Right ventricle myocardium inferior (tissue), 1 donor: ENCODE measurements at regions of chr19 and their contacts with region 1.

Region 1: GRCh38 chr19:2168619-2169424 is 5.1 kb downstream of the DOT1L start:
- DNase-seq: peak; percentile 98
- ATAC-seq: peak; percentile 90

Region 2: GRCh38 chr19:2207991-2208860 is 39.4 kb after region 1 on chr19:
- intact Hi-C with region 1: loop called (anchors 2 kb)
- DNase-seq: no peak
- ATAC-seq: peak; percentile 76

Region 3: GRCh38 chr19:2610637-2611482 is 442.0 kb after region 1 on chr19:
- intact Hi-C with region 1: loop called (anchors 10 kb)
- DNase-seq: peak; percentile 95
- ATAC-seq: peak; percentile 90

Region 4: GRCh38 chr19:3950871-3951861 is 1782.3 kb after region 1 on chr19:
- intact Hi-C with region 1: loop called (anchors 5 kb)
- DNase-seq: peak; percentile 82
- ATAC-seq: peak; percentile 76